Psoas muscle (tissue), 8 donors: ENCODE measurements at regions of chr11 and their contacts with region 1.

Region 1: DNA sequence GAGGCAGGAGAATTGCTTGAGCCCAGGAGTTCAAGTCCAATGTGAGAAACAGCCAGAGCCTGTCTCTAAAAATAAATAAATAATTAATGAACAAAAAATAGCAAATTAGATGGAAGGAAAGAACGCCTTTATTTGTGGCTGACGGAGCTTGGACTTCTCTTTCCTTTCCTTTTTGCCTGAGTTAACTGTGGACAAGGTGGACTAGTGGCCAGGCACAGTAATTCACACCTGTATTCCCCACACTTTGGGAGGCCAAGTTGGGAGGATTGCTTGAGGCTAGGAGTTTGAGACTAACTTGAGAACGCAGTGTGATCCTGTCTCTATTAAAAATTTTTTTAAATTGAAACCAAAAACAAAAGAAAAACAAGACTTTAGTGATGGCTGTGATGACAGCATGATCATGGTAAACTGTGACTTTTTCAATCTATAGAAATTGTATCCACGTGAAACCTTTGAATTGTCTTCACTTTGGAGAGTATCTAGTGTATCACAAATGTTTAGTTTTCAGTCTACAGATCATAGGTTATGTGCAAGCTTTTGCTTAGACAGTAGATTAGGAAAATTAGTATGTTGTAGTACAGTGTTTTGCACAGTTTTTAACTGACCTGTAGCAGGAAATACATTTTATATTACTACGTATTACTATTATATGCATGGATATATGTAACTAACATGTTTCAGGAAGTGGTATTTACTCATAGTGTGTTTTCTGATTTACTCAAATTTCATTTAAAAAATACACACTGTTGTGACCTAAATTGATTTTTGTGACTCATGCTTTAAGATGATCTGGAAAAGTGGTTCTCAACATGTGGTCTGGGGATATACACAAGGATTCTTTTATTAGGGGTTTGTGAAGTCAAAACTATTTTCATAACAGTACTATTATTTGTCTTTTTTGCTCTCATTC is 42.1 kb downstream of the KDM2A start:
- DNase-seq: no peak
- ATAC-seq: no peak
- H3K4me3 ChIP-seq: no peak overlapping the region
- H3K27ac ChIP-seq: no peak overlapping the region
- H3K4me1 ChIP-seq: peaks cover 37% of the 10 kb centered on the region
- H3K27me3 ChIP-seq: no peaks in the 10 kb centered on the region
- CTCF ChIP-seq: no peak

Region 2: GRCh38 chr11:67082035-67082791 is 78.9 kb before region 1 on chr11:
- intact Hi-C with region 1: loop called (anchors 5 to 10 kb)
- DNase-seq: no peak
- ATAC-seq: peak in 3 of 4 donors; percentile 21 to 47 (median 46)
- H3K4me3 ChIP-seq: no peak overlapping the region
- H3K27ac ChIP-seq: no peak overlapping the region
- H3K4me1 ChIP-seq: peaks cover 9% of the 10 kb centered on the region
- H3K27me3 ChIP-seq: no peaks in the 10 kb centered on the region
- CTCF ChIP-seq: no peak